WTC11 (cell line): ENCODE measurements at regions of chr6 and their contacts with region 1.

Region 1: DNA sequence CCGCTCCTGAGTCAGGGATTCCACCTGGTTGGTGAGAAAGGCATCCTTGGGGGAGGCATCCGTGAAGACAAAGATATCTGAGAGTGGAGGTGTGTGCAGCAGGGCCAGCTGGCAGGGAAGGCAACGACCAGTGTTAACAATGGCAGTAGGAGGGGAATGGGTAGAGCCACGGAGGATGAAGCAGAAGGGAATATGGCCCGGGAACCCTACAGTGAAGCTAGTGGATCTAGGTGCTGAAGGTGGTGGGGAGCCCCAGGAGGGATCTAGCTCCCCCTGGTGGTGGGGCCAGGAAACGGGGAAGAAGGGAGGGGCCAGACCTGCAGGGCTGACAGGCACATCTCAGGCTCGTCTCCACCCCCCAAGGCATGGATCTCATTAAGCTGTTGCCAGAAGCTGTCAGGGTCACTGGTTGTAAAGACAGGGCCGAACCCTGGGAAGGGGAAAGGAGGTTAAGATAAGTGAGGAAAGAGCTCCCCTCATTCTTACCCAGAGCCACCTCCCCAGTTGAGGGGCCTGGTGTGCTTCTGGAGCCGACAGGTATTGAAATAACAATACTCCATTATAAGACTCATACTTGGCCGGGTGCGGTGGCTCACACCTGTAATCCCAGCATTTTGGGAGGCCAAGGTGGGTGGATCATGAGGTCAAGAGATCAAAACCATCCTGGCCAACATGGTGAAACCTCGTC is 7.3 kb downstream of the VWA7 start:
- DNase-seq: peak; percentile 93
- ATAC-seq: peak; percentile 66
- H3K4me3 Mint-ChIP-seq: no peak overlapping the region
- H3K27ac Mint-ChIP-seq: no peak overlapping the region
- H3K4me1 Mint-ChIP-seq: peaks cover 14% of the 10 kb centered on the region
- H3K27me3 Mint-ChIP-seq: no peaks in the 10 kb centered on the region; the same call in 1 of the 2 replicates
- CTCF ChIP-seq: peak; percentile 90

Region 2: DNA sequence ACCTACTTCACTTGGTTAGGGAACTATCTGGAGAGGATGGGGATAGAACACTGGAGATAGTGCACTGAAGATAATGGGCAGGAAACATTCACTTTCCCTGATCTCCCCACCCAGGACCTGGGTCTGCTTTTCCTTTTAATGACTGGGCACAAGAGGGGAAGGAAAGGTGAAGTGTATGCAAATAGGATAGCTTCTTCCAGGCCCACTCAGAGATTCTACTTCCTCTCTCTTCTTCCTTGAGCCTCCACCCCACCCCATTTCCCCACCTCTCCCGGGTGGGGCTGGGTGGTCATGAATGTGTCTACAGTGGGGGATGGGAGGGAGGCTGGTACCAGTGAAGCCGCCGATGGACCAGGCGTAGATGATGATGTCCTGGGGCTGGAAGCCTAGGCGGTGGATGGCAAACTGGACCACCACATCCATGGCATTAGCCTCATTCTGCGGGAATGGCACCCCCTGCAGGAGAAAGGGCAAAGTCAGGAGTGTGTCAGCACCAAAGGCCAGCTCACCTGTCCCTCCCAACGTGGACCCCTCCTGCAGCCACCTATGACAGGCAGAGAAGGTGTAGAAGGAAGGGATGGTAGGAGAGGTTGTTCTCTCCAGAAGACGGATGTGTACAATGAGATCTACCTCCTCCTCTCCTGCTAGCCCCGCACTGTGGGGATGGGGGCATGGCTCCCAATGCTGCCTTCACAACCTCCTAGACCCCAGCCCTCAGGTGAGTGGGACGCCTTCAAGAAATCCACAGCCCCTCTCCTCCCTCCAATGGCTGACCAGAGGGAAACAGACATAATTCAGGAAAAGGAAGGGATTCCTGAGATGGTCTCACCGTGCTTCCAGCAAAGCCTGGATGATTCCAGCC is 80.3 kb before region 1 on chr6:
- CTCF ChIA-PET with region 1: interaction called, 13 read pairs
- POLR2A ChIA-PET with region 1: interaction called, 5 read pairs
- DNase-seq: peak; percentile 69
- ATAC-seq: peak; percentile 86
- H3K4me3 Mint-ChIP-seq: no peak overlapping the region
- H3K27ac Mint-ChIP-seq: no peak overlapping the region
- H3K4me1 Mint-ChIP-seq: no peaks in the 10 kb centered on the region
- H3K27me3 Mint-ChIP-seq: no peaks in the 10 kb centered on the region
- CTCF ChIP-seq: no peak

Region 3: GRCh38 chr6:31729515-31729978 is 40.3 kb before region 1 on chr6:
- CTCF ChIA-PET with region 1: interaction called, 66 read pairs
- POLR2A ChIA-PET with region 1: interaction called, 7 read pairs
- DNase-seq: peak; percentile 95
- ATAC-seq: peak; percentile 78
- H3K4me3 Mint-ChIP-seq: peak overlapping the region; percentile 93
- H3K27ac Mint-ChIP-seq: peak overlapping the region; percentile 99
- H3K4me1 Mint-ChIP-seq: peaks cover 21% of the 10 kb centered on the region
- H3K27me3 Mint-ChIP-seq: no peaks in the 10 kb centered on the region
- CTCF ChIP-seq: no peak; the same call in 1 of the 2 replicates

Region 4: DNA sequence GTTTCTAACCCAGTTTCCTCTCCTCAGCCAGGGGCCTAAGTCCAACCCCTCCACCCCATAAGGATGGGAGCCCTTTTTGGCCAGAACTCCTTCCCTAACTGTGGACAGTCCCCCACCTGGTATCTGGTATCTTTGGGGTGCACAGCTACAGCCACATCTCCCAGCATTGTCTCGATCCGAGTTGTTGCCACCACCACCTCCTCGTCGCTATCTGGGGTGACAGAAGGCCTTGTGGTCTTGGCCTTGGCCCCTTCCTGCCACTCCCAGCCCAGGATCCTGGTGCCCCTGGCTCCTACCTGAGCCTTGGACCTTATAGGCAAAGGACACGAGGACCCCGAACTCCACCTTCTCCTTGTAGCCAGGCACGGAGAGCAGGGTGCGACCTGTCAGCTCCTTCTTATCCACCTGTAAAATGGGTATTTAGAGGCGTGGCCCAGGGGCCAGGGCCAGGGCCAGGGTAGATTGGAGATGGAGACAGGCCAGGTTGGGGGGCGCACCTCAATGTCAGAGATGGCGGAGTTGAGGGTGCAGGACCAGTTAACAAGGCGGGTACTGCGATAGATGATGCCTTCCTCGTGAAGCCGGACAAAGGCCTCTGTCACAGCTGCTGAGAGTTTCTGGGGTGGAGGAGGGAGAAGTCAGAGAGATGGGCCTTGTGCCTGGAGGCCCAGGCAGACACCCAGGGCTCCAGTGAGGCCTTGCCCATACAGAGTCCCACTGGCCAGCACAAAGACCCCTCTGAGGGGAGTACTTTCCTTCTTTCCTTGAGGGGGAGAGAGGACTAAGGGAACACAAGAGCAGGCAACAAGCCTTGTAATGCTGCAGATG is 14.5 kb after region 1 on chr6:
- CTCF ChIA-PET with region 1: interaction called, 11 read pairs
- POLR2A ChIA-PET with region 1: no interaction called
- DNase-seq: no peak
- ATAC-seq: no peak
- H3K4me3 Mint-ChIP-seq: no peak overlapping the region
- H3K27ac Mint-ChIP-seq: no peak overlapping the region; the same call in 1 of the 2 replicates
- H3K4me1 Mint-ChIP-seq: no peaks in the 10 kb centered on the region
- H3K27me3 Mint-ChIP-seq: no peaks in the 10 kb centered on the region
- CTCF ChIP-seq: no peak

Region 5: GRCh38 chr6:31815025-31815838 is 45.4 kb after region 1 on chr6 and contains the starts of genes HSPA1A and HSPA1L:
- CTCF ChIA-PET with region 1: interaction called, 11 read pairs
- POLR2A ChIA-PET with region 1: interaction called, 4 read pairs
- DNase-seq: peak; percentile 98
- ATAC-seq: peak; percentile 91
- H3K4me3 Mint-ChIP-seq: peak within 1 kb of the TSS; percentile 85
- H3K27ac Mint-ChIP-seq: peak within 1 kb of the TSS; percentile 98
- H3K4me1 Mint-ChIP-seq: peaks cover 27% of the 10 kb centered on the region
- H3K27me3 Mint-ChIP-seq: no peaks in the 10 kb centered on the region; the same call in 1 of the 2 replicates
- CTCF ChIP-seq: no peak
- total RNA-seq, gene HSPA1A: 57.2 to 80.1 TPM (median 75.8 TPM) in 3 replicates
- total RNA-seq, gene HSPA1L: 1.2 to 2.1 TPM (median 1.9 TPM) in 3 replicates

Region 6: GRCh38 chr6:31922942-31923341 is 153.1 kb after region 1 on chr6:
- CTCF ChIA-PET with region 1: interaction called, 10 read pairs
- POLR2A ChIA-PET with region 1: no interaction called
- DNase-seq: peak; percentile 50
- ATAC-seq: peak; percentile 87
- H3K4me3 Mint-ChIP-seq: no peak overlapping the region
- H3K27ac Mint-ChIP-seq: no peak overlapping the region
- H3K4me1 Mint-ChIP-seq: no peaks in the 10 kb centered on the region
- H3K27me3 Mint-ChIP-seq: peaks cover 15% of the 10 kb centered on the region
- CTCF ChIP-seq: no peak